IMR-90 (cell line): ENCODE measurements at regions of chr17 and their contacts with region 1.

Region 1: DNA sequence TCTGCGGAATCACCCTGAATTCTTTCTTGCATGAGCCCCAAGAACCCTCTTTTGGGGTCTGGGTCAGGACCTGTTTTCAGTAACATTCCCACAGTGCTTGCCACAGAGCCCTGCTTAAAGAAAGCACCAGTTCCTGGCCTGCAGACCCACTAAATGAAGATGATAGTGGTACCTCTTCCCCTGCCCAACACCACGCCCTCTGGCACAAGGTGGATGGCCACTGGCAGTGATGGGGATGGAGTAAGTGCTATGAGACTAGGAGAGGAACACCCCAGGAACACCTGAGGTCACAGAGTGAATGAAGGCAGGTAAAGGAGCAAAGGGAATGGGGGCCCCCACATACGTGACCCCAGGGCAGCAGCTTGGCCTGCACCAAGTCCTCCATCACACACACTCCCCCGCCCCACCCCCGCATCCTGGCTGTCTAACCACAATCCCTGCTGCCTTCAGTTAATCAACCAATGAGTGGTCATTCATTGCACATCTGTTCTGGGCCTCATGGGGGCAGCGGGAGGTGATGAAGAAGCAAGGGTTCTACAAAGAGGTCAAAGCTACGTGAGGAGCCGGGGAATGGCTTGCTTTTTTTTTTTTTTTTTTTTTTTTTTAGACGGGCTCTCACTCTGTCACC is 3.9 kb upstream of the PPY start:
- DNase-seq: no peak
- ATAC-seq: no peak
- H3K4me3 ChIP-seq: no peak overlapping the region
- H3K27ac ChIP-seq: no peak overlapping the region
- H3K4me1 ChIP-seq: no peaks in the 10 kb centered on the region
- H3K27me3 ChIP-seq: peaks cover 22% of the 10 kb centered on the region
- CTCF ChIP-seq: no peak
- POLR2A ChIP-seq: no peak
- RAD21 ChIP-seq: no peak

Region 2: DNA sequence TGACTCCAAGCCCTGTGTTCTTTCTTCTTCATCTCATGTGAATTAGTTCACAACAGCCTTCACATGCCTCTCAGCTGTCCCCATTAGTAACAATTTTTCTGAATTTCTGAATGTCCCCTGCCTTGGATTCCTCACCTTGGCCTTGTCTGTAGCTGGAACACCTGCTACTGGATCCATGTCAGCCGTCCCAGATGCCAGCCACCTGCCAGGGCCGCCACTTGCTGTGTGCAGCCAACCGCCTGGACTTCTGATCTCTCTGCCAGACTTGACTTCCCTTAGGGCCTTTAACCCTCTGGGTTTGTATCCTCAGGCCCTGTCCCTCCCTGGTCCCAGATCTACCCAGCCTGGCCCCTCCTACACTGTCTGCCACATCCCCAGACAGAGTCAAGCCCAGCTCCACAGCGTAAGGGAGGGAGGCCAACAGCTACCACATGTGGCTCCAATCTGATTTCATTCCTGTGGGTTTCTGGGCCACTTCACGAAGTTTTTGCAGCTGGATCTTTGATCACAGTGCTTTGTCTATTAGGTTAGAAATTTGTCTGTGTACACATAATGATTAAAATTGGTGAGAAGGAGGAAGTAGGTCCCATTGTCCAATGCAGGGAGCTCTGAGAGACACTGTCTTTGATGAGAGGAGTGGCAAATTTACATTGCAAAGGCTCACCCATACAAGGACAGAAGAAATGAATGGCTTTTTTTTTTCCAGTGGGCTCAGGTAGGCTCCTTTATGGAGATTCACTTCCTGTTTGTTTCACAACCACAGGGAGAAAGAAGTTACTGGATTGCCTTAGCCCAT is 54.1 kb before region 1 on chr17:
- CTCF ChIA-PET with region 1: no interaction called
- POLR2A ChIA-PET with region 1: no interaction called
- dilution Hi-C with region 1: no loop called
- in situ Hi-C with region 1: no loop called
- intact Hi-C with region 1: no loop called
- DNase-seq: no peak
- ATAC-seq: no peak
- H3K4me3 ChIP-seq: no peak overlapping the region
- H3K27ac ChIP-seq: no peak overlapping the region
- H3K4me1 ChIP-seq: no peaks in the 10 kb centered on the region
- H3K27me3 ChIP-seq: peaks cover 9% of the 10 kb centered on the region
- CTCF ChIP-seq: no peak
- POLR2A ChIP-seq: no peak
- RAD21 ChIP-seq: no peak

Region 3: DNA sequence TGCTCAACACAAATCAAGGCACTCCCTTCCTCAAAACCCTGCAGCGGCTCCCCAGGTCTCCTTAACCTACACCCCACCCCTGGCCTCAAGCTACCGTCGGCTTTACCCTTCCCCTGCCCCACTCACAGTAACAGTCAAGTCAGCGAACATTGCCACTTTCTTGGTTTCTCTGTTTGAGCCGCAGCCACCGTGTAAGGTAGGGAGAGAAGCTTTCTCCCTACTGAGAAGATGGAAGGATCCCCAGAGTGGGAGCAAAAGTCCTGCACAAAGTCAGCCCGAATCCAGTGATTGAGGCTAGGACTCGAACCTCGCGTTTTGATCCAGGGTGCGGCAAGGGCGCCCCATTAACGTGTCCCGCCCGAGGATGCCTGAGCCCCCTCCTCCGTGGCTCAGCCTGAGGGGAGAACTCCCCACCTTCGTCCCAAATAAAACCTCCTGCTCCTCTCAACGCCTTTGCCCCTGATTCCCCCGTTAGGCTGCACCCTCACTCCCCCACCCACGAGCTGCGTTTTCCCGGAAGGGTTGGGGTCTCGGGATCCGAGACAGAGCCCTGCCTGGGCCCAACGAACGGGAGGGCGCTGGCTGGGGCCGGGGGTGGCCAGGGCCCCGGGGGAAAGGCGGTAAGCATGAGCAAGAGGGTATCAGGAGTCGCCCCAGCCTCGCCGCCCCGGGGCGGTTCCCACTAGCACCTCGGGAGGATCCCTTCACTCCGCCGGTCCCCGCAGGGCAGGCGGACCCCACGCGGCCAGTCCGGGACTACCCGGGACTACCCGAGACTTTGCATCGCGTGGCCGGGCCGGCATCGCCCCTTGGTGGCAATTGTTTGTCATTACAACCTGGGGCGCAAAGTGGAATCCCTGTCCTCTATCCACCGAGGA is 48.3 kb after region 1 on chr17:
- CTCF ChIA-PET with region 1: interaction called, 11 read pairs
- POLR2A ChIA-PET with region 1: no interaction called
- dilution Hi-C with region 1: no loop called
- in situ Hi-C with region 1: no loop called
- intact Hi-C with region 1: loop called (anchors 1 kb)
- DNase-seq: peak; percentile 37
- ATAC-seq: peak; percentile 99
- H3K4me3 ChIP-seq: no peak overlapping the region; the same call in 1 of the 2 replicates
- H3K27ac ChIP-seq: no peak overlapping the region
- H3K4me1 ChIP-seq: no peaks in the 10 kb centered on the region; the same call in 1 of the 2 replicates
- H3K27me3 ChIP-seq: peaks cover 18% of the 10 kb centered on the region
- CTCF ChIP-seq: peak; percentile 96
- POLR2A ChIP-seq: peak; percentile 38; the same call in 1 of the 2 replicates
- RAD21 ChIP-seq: peak; percentile 93

Region 4: GRCh38 chr17:44170499-44171201 is 224.5 kb after region 1 on chr17 and contains the start of gene ASB16:
- CTCF ChIA-PET with region 1: interaction called, 10 read pairs
- POLR2A ChIA-PET with region 1: interaction called, 5 read pairs
- dilution Hi-C with region 1: no loop called
- in situ Hi-C with region 1: loop called (anchors 10 kb)
- intact Hi-C with region 1: loop called (anchors 2 kb)
- DNase-seq: peak; percentile 55
- ATAC-seq: peak; percentile 72
- H3K4me3 ChIP-seq: no peak within 1 kb of the TSS
- H3K27ac ChIP-seq: no peak within 1 kb of the TSS
- H3K4me1 ChIP-seq: peaks cover 11% of the 10 kb centered on the region
- H3K27me3 ChIP-seq: no peaks in the 10 kb centered on the region
- CTCF ChIP-seq: no peak
- POLR2A ChIP-seq: no peak
- RAD21 ChIP-seq: no peak
- total RNA-seq, gene ASB16: not detected in 2 replicates